Astrocyte of the cerebellum (primary cell): ENCODE measurements at regions of chr7 and their contacts with region 1.

Region 1: GRCh38 chr7:32942786-32943653 is 14.2 kb upstream of the FKBP9 start:
- DNase-seq: no peak
- H3K4me3 ChIP-seq: peak overlapping the region; percentile 74
- CTCF ChIP-seq: peak; percentile 51

Region 2: DNA sequence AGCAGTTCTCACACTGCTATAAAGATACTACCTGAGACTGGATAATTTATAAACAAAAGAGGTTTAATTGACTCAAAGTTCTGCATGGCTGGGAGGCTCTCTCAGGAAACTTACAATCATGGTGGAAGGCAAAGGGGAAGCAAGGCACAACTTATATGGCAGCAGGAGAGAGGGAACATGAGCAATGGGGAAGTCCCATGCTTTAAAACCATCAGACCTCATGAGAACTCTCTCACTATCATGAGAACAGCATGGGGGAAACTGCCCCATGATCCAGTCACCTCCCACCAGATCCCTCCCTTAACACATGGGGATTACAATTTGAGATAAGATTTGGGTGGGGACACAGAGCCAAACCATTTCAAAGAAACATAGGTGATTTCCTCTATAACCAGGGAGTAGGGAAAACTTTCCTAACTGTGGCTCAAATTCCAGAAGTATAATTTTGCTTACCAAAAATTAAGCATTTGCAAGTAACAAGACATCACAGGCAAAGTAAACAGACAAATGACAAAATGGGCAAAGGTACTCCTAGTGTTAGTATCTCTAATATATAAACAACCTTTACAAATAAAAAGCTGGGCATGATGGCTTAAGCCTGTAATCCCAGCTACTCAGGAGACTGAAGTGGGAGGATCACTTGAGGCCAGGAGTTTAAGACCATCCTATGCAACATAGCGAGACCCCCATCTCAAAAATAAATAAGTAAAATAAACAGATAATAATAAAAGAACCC is 139.4 kb before region 1 on chr7:
- in situ Hi-C with region 1: loop called (anchors 25 kb)
- DNase-seq: no peak
- H3K4me3 ChIP-seq: no peak overlapping the region
- CTCF ChIP-seq: no peak

Region 3: GRCh38 chr7:32879460-32879859 is 63.6 kb before region 1 on chr7:
- in situ Hi-C with region 1: no loop called
- DNase-seq: no peak
- H3K4me3 ChIP-seq: no peak overlapping the region
- CTCF ChIP-seq: no peak

Region 4: DNA sequence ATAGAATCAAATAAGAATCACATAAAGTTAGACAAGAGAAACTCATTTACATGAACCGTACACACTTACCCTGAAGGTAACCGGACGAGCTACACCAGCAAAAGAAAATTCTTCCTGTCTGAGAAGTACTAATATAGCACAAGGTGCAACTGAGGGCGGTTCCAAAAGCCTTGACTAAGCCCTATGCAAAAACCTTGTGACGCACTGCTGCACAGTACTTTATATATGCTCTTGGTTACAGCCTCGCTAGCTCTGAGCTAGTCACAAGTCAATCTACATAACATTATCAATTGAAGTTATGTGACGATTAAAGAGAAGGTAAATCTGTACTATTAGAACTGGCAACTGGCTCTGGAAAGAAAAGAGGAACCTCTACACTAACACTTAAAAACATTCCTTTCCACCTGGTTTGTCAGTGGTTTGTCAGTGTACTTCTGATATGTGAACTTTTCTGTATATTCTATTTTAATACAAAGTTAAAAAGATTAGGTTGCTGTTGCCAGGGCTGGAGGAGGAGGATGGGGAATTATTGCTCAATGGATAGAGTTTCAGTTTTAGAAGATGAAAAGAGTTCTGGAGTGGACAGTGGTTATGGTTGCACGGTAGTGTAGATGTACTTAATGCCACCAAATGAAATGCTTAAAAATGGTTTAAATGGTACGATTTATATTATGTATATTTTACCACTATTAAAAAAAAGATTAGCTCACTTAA is 97.9 kb after region 1 on chr7:
- in situ Hi-C with region 1: loop called (anchors 5 kb)
- DNase-seq: no peak
- H3K4me3 ChIP-seq: no peak overlapping the region
- CTCF ChIP-seq: no peak